Dendritic cell treated with granulocyte-macrophage colony-stimulating factor and Interleukin-4, amounts not matched to agents 40 ng/mL and 50 ng/mL, for 4 days (primary cell): ENCODE measurements at regions of chr14 and their contacts with region 1.

Region 1: GRCh38 chr14:34331728-34332623 is 130.1 kb downstream of the SPTSSA start:
- H3K4me3 Mint-ChIP-seq: no peak overlapping the region
- H3K27ac Mint-ChIP-seq: no peak overlapping the region
- H3K4me1 Mint-ChIP-seq: peaks cover 10% of the 10 kb centered on the region
- H3K27me3 Mint-ChIP-seq: no peaks in the 10 kb centered on the region

Region 2: GRCh38 chr14:34300882-34301734 is 30.9 kb before region 1 on chr14:
- intact Hi-C with region 1: no loop called
- H3K4me3 Mint-ChIP-seq: no peak overlapping the region
- H3K27ac Mint-ChIP-seq: no peak overlapping the region
- H3K4me1 Mint-ChIP-seq: no peaks in the 10 kb centered on the region
- H3K27me3 Mint-ChIP-seq: no peaks in the 10 kb centered on the region

Region 3: GRCh38 chr14:34498684-34499412 is 166.9 kb after region 1 on chr14:
- intact Hi-C with region 1: loop called (anchors 2 kb)
- H3K4me3 Mint-ChIP-seq: no peak overlapping the region
- H3K27ac Mint-ChIP-seq: no peak overlapping the region
- H3K4me1 Mint-ChIP-seq: peaks cover 17% of the 10 kb centered on the region
- H3K27me3 Mint-ChIP-seq: no peaks in the 10 kb centered on the region

Region 4: DNA sequence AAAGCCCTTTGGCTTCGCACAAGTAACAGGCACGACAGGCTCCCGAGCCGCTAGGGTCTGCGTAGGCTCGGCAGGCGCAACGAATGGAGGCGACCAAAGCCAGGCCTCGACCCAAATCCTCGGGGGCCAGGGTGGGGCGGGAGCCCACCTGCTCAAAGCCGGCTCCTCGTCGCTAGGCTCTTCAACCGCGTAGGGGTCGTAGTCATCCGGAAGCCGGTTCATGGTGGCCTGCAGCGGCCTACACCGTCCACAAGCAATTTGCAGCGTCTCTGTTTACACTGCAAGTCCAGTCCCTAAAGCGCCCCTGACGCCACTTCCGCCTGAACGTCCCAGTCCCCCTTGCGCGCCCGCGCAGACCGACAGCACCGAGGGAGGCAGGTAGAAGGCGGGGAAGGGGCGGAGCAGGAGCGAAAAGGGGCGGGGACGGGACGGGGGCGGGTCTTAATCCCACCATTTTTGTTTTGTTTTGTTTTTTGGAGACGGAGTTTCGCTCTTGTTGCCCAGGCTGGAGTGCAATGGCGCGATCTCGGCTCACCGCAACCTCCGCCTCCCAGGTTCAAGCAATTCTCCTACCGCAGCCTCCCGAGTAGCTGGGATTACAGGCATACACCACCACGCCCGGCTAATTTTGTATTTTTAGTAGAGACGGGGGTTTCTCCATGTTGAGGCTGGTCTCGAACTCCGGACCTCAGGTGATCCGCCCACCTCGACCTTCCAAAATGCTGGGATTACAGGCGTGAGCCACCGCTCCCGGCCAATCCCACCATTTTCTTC is 207.6 kb after region 1 on chr14 and contains the start of gene EAPP:
- intact Hi-C with region 1: loop called (anchors 5 kb)
- H3K4me3 Mint-ChIP-seq: peak within 1 kb of the TSS; percentile 97
- H3K27ac Mint-ChIP-seq: peak within 1 kb of the TSS; percentile 99
- H3K4me1 Mint-ChIP-seq: peaks cover 9% of the 10 kb centered on the region
- H3K27me3 Mint-ChIP-seq: no peaks in the 10 kb centered on the region